ENCODE measurements at regions of chr2 and their contacts with region 1.

Region 1: DNA sequence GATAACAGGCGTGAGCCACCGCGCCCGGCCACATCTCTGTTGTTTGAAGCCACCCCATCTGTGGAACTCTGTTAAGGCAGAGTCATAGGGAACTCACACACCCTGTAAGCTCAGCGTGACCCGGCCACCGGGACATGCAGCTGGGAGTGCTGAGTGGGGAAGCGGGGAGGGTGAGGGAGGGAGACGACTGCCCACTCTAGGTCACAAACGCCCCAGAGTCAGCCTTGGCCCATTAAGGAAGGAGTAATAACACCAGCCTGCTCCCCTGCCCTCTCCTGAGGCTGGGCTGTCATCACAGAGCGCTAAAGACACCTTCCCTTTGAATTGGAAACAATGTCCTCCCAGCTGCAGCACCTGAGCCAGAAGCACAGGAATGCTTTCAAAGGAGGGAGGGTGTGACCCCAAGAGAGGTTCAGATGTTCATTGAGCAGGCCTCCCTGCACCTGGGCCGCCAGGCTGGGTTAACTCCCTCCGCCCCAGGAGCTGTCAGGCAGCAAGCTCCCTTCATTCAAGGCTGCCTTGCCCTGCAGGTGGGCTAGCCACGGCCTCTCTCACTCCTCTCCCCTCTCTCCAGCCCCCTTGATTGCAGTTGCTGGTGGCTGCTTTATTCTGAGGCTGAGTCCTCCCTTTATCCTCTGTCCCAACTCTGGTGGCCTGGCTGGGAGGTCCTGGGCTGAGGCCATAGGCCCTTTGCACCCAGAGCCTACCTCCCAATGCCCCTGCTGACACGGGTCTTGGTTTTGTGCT is 77.2 kb upstream of the HPCAL1 start:
- DNase-seq: peak; percentile 47
- ATAC-seq: peak; percentile 68
- H3K4me3 Mint-ChIP-seq: no peak overlapping the region
- H3K27ac Mint-ChIP-seq: no peak overlapping the region
- H3K4me1 Mint-ChIP-seq: 0 out of 2 replicates have a peak, but pooled peaks cover 6% of the 10 kb centered on the region
- H3K27me3 Mint-ChIP-seq: no peaks in the 10 kb centered on the region
- CTCF ChIP-seq: no peak

Region 2: GRCh38 chr2:10003206-10004125 is 222.0 kb before region 1 on chr2:
- CTCF ChIA-PET with region 1: no interaction called
- POLR2A ChIA-PET with region 1: no interaction called
- DNase-seq: no peak
- ATAC-seq: no peak
- H3K4me3 Mint-ChIP-seq: no peak overlapping the region
- H3K27ac Mint-ChIP-seq: no peak overlapping the region
- H3K4me1 Mint-ChIP-seq: peaks cover 11% of the 10 kb centered on the region
- H3K27me3 Mint-ChIP-seq: no peaks in the 10 kb centered on the region; the same call in 1 of the 2 replicates
- CTCF ChIP-seq: no peak

Region 3: DNA sequence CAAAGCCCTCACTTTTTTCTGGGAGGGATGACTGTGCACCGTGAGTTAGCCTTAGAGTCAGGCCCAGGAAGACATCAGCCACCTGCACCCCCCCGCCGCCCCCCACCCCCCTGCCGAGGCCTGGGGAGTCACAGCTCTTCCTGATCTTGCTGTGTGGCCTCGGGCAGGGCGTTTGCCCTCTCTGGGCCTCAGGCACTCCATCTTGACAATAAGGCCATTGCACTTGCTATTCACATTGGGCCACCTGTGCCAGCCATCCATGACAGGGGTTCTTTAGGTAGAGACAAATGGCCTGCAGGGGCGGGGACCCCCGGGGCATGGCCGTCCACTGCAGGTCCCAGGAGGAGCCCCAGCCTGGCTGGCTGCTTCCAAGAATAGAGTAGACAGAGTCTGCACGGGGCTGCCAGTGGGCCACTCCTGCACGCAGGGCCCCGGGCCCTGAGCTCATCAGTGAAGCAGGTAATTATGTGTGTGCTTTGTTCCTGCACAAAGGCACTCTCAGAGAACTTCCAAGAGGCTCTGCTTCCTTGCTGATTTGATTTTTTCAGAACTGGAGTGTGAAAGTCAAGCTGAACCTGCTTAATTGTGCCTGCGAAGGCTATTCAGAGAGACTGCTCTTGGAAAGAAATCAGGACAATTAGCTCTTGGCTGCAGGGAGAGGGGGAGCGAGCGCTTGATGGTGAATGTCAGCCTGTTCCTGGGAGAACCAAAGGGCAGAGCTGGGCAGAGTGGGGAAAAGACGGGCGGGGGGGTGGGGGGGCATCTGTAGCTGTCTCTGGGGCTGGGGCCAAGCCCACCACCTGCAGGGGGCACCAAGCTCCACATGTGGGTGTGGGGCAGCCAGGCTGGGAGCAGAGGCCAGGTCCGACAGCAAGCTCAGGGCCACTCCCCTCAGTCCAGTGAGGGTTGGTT is 62.6 kb before region 1 on chr2:
- CTCF ChIA-PET with region 1: interaction called, 12 read pairs
- POLR2A ChIA-PET with region 1: no interaction called
- DNase-seq: peak; percentile 56
- ATAC-seq: peak; percentile 66
- H3K4me3 Mint-ChIP-seq: no peak overlapping the region
- H3K27ac Mint-ChIP-seq: peak overlapping the region; percentile 91
- H3K4me1 Mint-ChIP-seq: 0 out of 2 replicates have a peak, but pooled peaks cover 3% of the 10 kb centered on the region
- H3K27me3 Mint-ChIP-seq: no peaks in the 10 kb centered on the region
- CTCF ChIP-seq: no peak

Region 4: GRCh38 chr2:10204326-10205161 is 20.9 kb before region 1 on chr2:
- CTCF ChIA-PET with region 1: no interaction called
- POLR2A ChIA-PET with region 1: no interaction called
- DNase-seq: no peak
- ATAC-seq: no peak
- H3K4me3 Mint-ChIP-seq: no peak overlapping the region
- H3K27ac Mint-ChIP-seq: 0 out of 2 replicates have a peak overlapping the region, but pooled peaks have one; percentile 41
- H3K4me1 Mint-ChIP-seq: no peaks in the 10 kb centered on the region
- H3K27me3 Mint-ChIP-seq: no peaks in the 10 kb centered on the region
- CTCF ChIP-seq: no peak

Region 5: DNA sequence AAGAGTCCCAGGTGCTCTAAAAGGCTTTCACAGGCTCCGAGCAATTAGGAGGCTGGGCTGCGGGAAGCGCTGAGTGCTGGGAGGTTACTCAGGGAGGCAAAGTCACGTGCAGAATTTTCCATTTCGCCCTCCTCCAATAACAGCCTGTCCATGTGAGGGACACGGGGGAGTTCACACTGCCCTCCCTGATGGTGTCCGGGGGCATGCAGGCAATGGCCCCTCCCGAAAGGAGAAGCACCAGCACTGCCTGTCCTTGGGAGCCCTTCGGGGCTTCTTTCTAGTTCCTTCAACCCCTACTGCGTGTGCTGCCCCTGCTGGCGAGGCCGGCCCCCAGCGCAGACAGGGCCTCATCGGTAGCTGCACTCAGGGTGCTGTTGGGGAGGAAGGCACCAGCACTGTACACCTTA is 14.1 kb after region 1 on chr2:
- CTCF ChIA-PET with region 1: interaction called, 23 read pairs
- POLR2A ChIA-PET with region 1: no interaction called
- DNase-seq: peak; percentile 67
- ATAC-seq: peak; percentile 89
- H3K4me3 Mint-ChIP-seq: no peak overlapping the region
- H3K27ac Mint-ChIP-seq: no peak overlapping the region
- H3K4me1 Mint-ChIP-seq: no peaks in the 10 kb centered on the region
- H3K27me3 Mint-ChIP-seq: no peaks in the 10 kb centered on the region
- CTCF ChIP-seq: 0 out of 2 replicates have a peak, but pooled peaks have one; percentile 30

Measured in WTC11 (cell line).